Dendritic cell treated with granulocyte-macrophage colony-stimulating factor and Interleukin-4, amounts not matched to agents 40 ng/mL and 50 ng/mL, for 4 days (primary cell): ENCODE measurements at regions of chr20 and their contacts with region 1.

Region 1: DNA sequence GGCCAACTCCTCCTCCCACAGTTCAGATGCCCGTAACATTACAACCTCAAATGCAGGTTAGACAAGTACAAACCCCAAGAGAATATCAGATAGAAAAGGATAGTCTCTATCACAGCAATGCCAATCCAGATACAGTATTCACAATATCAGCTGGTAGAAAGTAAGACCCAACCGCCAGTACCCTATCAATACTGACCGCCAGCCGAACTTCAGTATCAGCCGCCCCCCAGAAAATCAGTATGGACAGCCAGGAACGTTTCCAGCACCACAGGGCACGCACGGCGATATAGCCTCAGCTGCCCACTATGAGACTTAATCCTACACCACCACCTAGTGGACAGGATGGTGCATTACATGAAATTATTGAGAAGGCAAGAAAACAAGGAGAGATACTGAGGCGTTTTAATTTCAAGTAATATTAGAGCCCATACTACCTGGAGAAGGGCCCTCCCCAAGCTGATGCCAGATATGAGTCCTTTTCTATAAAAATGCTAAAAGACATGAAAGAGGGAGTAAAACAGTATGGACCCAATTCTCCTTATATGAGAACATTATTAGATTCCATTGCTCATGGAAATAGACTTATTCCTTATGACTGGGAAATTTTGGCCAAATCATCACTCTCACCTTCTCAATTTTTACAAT is 17.6 kb upstream of the EIF2S2 start:
- H3K4me3 Mint-ChIP-seq: no peak overlapping the region
- H3K27ac Mint-ChIP-seq: no peak overlapping the region
- H3K4me1 Mint-ChIP-seq: peaks cover 5% of the 10 kb centered on the region
- H3K27me3 Mint-ChIP-seq: peaks cover 18% of the 10 kb centered on the region

Region 2: GRCh38 chr20:33862709-33863403 is 266.8 kb before region 1 on chr20:
- intact Hi-C with region 1: loop called (anchors 5 kb)
- H3K4me3 Mint-ChIP-seq: no peak overlapping the region
- H3K27ac Mint-ChIP-seq: no peak overlapping the region
- H3K4me1 Mint-ChIP-seq: peaks cover 16% of the 10 kb centered on the region
- H3K27me3 Mint-ChIP-seq: no peaks in the 10 kb centered on the region

Region 3: GRCh38 chr20:33915726-33916331 is 213.8 kb before region 1 on chr20:
- intact Hi-C with region 1: loop called (anchors 2 kb)
- H3K4me3 Mint-ChIP-seq: no peak overlapping the region
- H3K27ac Mint-ChIP-seq: no peak overlapping the region
- H3K4me1 Mint-ChIP-seq: peaks cover 13% of the 10 kb centered on the region
- H3K27me3 Mint-ChIP-seq: peaks cover 4% of the 10 kb centered on the region

Region 4: GRCh38 chr20:33933469-33933909 is 196.2 kb before region 1 on chr20:
- intact Hi-C with region 1: loop called (anchors 5 kb)
- H3K4me3 Mint-ChIP-seq: no peak overlapping the region
- H3K27ac Mint-ChIP-seq: peak overlapping the region; percentile 27
- H3K4me1 Mint-ChIP-seq: peaks cover 5% of the 10 kb centered on the region
- H3K27me3 Mint-ChIP-seq: peaks cover 3% of the 10 kb centered on the region

Region 5: GRCh38 chr20:34215711-34216381 is 86.2 kb after region 1 on chr20:
- intact Hi-C with region 1: no loop called
- H3K4me3 Mint-ChIP-seq: peak overlapping the region; percentile 82
- H3K27ac Mint-ChIP-seq: peak overlapping the region; percentile 88
- H3K4me1 Mint-ChIP-seq: peaks cover 14% of the 10 kb centered on the region
- H3K27me3 Mint-ChIP-seq: peaks cover 31% of the 10 kb centered on the region